OCI-LY7 (cell line): ENCODE measurements at regions of chr20 and their contacts with region 1.

Region 1: GRCh38 chr20:13105864-13106457 is 97.2 kb downstream of the SPTLC3 start:
- DNase-seq: peak; percentile 41
- H3K4me3 ChIP-seq: no peak overlapping the region
- H3K27ac ChIP-seq: no peak overlapping the region
- H3K4me1 ChIP-seq: no peaks in the 10 kb centered on the region
- CTCF ChIP-seq: peak; percentile 87

Region 2: DNA sequence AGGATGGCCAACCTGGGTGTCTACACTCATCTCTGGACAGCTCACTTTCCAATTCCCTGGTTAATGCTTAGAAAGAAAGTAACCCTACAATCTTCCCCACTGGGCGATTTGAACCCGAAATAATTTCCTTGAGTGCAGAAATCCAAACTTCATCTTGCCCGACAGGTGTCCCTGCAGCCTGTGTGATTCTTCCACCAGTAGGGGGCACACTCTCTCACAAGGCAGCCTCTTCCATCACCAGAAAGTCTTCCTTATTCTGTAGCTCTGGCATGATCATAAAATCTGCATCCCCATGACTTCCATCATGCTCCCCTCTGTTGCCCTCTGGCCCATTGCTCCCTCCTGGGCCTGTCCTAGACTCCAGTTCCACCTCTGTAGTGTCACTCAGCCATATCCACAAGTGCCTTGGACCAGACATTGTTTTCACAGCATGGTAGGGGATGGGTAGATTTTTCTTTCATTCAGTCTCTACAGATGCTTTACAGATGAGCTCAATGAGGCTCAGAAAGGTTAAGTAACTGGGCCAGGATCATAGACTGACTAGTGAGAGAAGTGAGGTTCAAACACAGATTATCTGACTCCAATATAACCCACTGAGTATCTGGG is 267.6 kb before region 1 on chr20:
- CTCF ChIA-PET with region 1: no interaction called
- POLR2A ChIA-PET with region 1: no interaction called
- intact Hi-C with region 1: loop called (anchors 10 kb)
- DNase-seq: peak; percentile 8
- H3K4me3 ChIP-seq: no peak overlapping the region
- H3K27ac ChIP-seq: no peak overlapping the region
- H3K4me1 ChIP-seq: no peaks in the 10 kb centered on the region
- CTCF ChIP-seq: peak; percentile 72

Region 3: DNA sequence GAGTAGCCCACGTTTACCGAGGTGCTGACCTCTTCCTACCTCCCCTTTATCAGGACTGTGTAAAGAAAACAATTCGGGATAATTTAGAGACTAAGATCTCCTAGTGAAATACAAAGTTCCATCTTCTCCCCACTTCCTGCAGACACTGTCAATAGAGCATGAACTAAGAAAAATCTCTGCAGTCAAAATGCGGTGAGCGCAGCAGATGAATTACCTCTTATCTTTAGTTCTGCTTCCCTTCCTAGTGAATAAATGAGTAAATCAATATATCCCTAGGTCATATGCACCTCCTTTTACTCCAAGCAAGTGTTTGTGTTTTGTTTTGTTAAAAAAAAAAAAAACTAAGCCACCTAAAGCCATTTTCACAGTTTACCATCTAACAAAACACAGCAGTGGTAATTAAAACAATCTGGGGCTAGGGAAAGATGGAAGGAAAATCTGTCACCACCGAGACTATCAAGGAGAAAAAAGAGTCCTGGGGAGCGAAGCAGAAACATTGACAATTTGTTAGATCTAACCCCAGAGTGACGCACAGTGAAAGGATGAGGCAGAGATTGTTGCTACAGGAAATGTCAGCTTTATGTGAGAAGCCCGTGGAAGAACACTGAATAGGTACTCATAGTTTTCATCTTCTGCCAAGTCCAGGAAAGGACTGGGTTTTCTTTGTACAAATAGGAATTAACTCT is 256.6 kb before region 1 on chr20:
- CTCF ChIA-PET with region 1: no interaction called
- POLR2A ChIA-PET with region 1: no interaction called
- intact Hi-C with region 1: no loop called
- DNase-seq: no peak
- H3K4me3 ChIP-seq: no peak overlapping the region
- H3K27ac ChIP-seq: no peak overlapping the region
- H3K4me1 ChIP-seq: no peaks in the 10 kb centered on the region
- CTCF ChIP-seq: no peak

Region 4: DNA sequence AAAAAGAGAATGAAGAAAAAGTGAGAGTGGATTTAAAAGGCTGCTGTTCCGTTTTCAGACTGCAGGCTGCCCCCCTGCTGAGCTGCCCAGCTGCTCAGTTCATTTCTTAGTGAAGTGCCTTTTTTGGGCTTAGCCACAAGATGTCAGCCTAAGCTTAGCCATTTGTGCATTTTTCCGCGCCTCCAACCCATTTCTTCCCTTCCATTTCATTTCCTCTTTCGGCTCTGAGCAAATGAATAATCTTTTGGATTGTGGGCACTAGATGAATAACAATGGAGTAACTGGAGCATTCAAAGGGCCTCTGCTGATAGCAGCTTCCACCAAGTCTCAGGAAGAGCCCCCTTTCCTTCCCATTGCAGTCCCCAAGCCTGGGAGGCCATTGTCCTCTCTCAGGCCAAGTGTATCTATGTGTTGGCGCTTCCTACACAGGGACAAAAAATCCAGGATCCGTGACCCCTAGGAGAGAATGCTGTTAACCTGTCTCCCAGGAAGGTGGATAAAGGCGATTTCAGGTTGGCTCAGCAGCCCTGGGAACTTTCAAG is 180.7 kb before region 1 on chr20:
- CTCF ChIA-PET with region 1: interaction called, 4 read pairs
- POLR2A ChIA-PET with region 1: no interaction called
- intact Hi-C with region 1: loop called (anchors 1 kb)
- DNase-seq: peak; percentile 57
- H3K4me3 ChIP-seq: no peak overlapping the region
- H3K27ac ChIP-seq: no peak overlapping the region
- H3K4me1 ChIP-seq: no peaks in the 10 kb centered on the region
- CTCF ChIP-seq: peak; percentile 82

Region 5: DNA sequence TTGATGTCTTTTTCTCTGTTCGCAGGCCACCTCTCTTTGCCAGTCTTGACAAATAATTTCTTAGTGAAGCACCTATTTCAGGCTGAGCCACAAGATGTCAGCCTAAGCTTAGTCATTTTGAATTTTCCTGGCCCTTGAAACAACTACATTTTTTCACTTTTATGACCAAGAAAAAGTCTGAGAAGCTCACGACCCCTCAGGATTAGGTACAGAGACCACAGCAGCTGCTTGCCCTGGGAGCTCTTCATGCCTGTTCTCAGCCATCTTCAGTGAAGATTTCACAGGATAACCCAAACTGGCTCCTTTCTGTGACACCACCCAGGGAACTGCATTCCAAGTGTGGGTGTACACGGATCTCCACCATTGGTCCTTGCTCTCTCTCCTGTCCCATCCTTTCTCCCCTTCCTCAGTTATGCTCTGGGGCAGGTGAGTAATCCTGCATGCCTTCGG is 135.6 kb before region 1 on chr20:
- CTCF ChIA-PET with region 1: no interaction called
- POLR2A ChIA-PET with region 1: no interaction called
- intact Hi-C with region 1: loop called (anchors 1 kb)
- DNase-seq: peak; percentile 11
- H3K4me3 ChIP-seq: no peak overlapping the region
- H3K27ac ChIP-seq: no peak overlapping the region
- H3K4me1 ChIP-seq: no peaks in the 10 kb centered on the region
- CTCF ChIP-seq: peak; percentile 70